CD8-positive, alpha-beta T cell (primary cell): ENCODE measurements at regions of chr4 and their contacts with region 1.

Region 1: DNA sequence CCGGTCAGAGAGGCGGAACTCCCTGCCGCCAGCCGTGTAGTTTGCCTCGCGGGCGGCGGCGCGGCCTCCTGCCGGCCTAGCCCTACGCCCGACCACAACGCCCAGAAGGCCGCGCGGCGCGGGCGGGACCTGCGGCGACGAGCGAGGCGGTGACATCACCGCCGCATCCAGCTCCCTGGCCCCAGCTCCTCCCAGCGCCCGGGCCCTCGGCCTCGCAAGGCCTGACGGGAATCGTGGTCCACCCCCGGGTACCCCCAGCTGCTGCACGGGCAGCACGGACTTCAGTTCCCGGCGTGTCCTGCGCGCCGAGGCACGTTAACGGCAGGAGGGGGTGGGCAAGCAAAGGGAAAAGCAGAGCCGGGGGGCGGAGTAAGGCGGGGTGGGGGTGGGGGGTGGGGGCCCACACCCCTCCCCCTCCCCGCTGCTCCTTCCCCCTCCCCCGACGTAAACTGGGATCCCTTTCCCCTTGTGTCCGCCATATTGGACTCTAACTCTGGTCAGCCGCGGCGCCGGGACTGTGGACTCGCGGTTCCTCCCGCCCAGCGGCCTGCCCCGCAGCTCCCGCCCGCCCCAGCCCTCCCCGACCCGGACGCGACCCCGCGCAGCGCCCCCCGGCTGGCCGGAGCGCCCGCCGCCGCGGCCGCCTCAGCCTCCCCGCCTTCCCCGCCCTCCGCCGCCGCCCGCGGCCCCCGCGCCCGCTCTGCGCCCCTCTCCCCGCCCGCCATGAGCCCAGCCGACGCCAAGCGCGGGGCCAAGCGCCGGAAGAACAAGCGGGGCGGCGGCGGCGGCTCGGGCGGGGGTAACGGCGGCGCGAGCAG is at the start of gene FAM193A:
- DNase-seq: peak; percentile 97 to 100 (median 99)
- ATAC-seq: peak; percentile 94
- H3K4me3 ChIP-seq: peak within 1 kb of the TSS; percentile 64 to 67
- H3K4me3 Mint-ChIP-seq: peak within 1 kb of the TSS; percentile 90
- H3K27ac ChIP-seq: peak within 1 kb of the TSS; percentile 71 to 76
- H3K27ac Mint-ChIP-seq: peak within 1 kb of the TSS; percentile 92
- H3K4me1 ChIP-seq: peaks cover 26% of the 10 kb centered on the region
- H3K4me1 Mint-ChIP-seq: peaks cover 29% of the 10 kb centered on the region
- H3K27me3 ChIP-seq: no peaks in the 10 kb centered on the region
- H3K27me3 Mint-ChIP-seq: no peaks in the 10 kb centered on the region
- CTCF ChIP-seq: no peak
- total RNA-seq, gene FAM193A: 29.0 to 30.2 TPM

Region 2: DNA sequence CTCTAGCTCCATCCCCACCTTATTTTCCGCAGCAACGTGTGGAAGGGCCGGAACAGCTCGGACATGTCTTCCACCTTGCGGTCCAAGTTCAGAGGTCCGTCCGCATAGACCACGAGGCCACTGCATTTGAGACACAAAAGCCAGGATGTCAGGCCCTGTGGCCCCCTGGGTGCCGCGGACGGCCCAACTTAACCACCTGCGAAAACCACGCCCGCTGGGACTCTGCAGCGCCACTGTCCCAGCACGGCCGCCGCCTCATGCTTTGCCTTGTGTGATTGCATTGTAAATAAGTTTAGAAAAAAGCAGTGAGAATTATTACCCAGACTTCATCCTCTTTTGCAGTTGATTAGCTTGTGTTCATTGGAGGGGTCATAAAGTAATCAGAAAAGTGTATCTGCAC is 216.2 kb before region 1 on chr4:
- CTCF ChIA-PET with region 1: no interaction called
- POLR2A ChIA-PET with region 1: no interaction called
- intact Hi-C with region 1: no loop called
- DNase-seq: peak in 4 of 9 experiments; percentile 40 to 68 (median 53)
- ATAC-seq: peak; percentile 48
- H3K4me3 ChIP-seq: no peak overlapping the region
- H3K4me3 Mint-ChIP-seq: no peak overlapping the region
- H3K27ac ChIP-seq: no peak overlapping the region
- H3K27ac Mint-ChIP-seq: no peak overlapping the region
- H3K4me1 ChIP-seq: peaks cover 7% of the 10 kb centered on the region
- H3K4me1 Mint-ChIP-seq: peaks cover 9% of the 10 kb centered on the region
- H3K27me3 ChIP-seq: no peaks in the 10 kb centered on the region
- H3K27me3 Mint-ChIP-seq: no peaks in the 10 kb centered on the region
- CTCF ChIP-seq: no peak

Region 3: GRCh38 chr4:2468445-2469192 is 67.8 kb before region 1 on chr4 and contains the start of gene RNF4:
- CTCF ChIA-PET with region 1: interaction called, 4 read pairs
- POLR2A ChIA-PET with region 1: interaction called, 20 read pairs
- intact Hi-C with region 1: loop called (anchors 1 kb)
- DNase-seq: peak; percentile 90 to 98 (median 94)
- ATAC-seq: peak; percentile 82
- H3K4me3 ChIP-seq: peak within 1 kb of the TSS; percentile 54 to 91
- H3K4me3 Mint-ChIP-seq: peak within 1 kb of the TSS; percentile 96
- H3K27ac ChIP-seq: peak within 1 kb of the TSS; percentile 95 to 97
- H3K27ac Mint-ChIP-seq: peak within 1 kb of the TSS; percentile 98
- H3K4me1 ChIP-seq: peaks cover 42% of the 10 kb centered on the region
- H3K4me1 Mint-ChIP-seq: peaks cover 45% of the 10 kb centered on the region
- H3K27me3 ChIP-seq: no peaks in the 10 kb centered on the region
- H3K27me3 Mint-ChIP-seq: no peaks in the 10 kb centered on the region
- CTCF ChIP-seq: no peak
- total RNA-seq, gene RNF4: 130 to 134 TPM

Region 4: GRCh38 chr4:2484993-2485392 is 51.4 kb before region 1 on chr4:
- CTCF ChIA-PET with region 1: interaction called, 3 read pairs
- POLR2A ChIA-PET with region 1: no interaction called
- intact Hi-C with region 1: loop called in 1 of 2 experiments (anchors 5 kb)
- DNase-seq: peak; percentile 37 to 85 (median 72)
- ATAC-seq: peak; percentile 90
- H3K4me3 ChIP-seq: peak overlapping the region; percentile 21 to 31
- H3K4me3 Mint-ChIP-seq: peak overlapping the region; percentile 70
- H3K27ac ChIP-seq: peak overlapping the region; percentile 11 to 66
- H3K27ac Mint-ChIP-seq: peak overlapping the region; percentile 84
- H3K4me1 ChIP-seq: peaks cover 72% of the 10 kb centered on the region
- H3K4me1 Mint-ChIP-seq: peaks cover 84% of the 10 kb centered on the region
- H3K27me3 ChIP-seq: no peaks in the 10 kb centered on the region
- H3K27me3 Mint-ChIP-seq: no peaks in the 10 kb centered on the region
- CTCF ChIP-seq: no peak

Region 5: GRCh38 chr4:2570551-2571222 is 34.3 kb after region 1 on chr4:
- CTCF ChIA-PET with region 1: no interaction called
- POLR2A ChIA-PET with region 1: no interaction called
- intact Hi-C with region 1: loop called in 1 of 2 experiments (anchors 2 kb)
- DNase-seq: peak; percentile 24 to 87 (median 60)
- ATAC-seq: peak; percentile 100
- H3K4me3 ChIP-seq: peak overlapping the region; percentile 6 to 33
- H3K4me3 Mint-ChIP-seq: peak overlapping the region; percentile 57
- H3K27ac ChIP-seq: peak overlapping the region; percentile 8 to 72
- H3K27ac Mint-ChIP-seq: peak overlapping the region; percentile 76
- H3K4me1 ChIP-seq: peaks cover 50% of the 10 kb centered on the region
- H3K4me1 Mint-ChIP-seq: peaks cover 65% of the 10 kb centered on the region
- H3K27me3 ChIP-seq: no peaks in the 10 kb centered on the region
- H3K27me3 Mint-ChIP-seq: no peaks in the 10 kb centered on the region
- CTCF ChIP-seq: no peak